ENCODE measurements at regions of chr4 and their contacts with region 1.

Region 1: GRCh38 chr4:153785910-153786721 is 2.8 kb downstream of the SFRP2 start:
- DNase-seq: peak in 1 of 35 experiments; percentile 38
- ATAC-seq: peak in 1 of 4 experiments; percentile 35
- H3K4me3 ChIP-seq: no peak overlapping the region
- H3K4me3 Mint-ChIP-seq: no peak overlapping the region
- H3K27ac ChIP-seq: no peak overlapping the region
- H3K27ac Mint-ChIP-seq: no peak overlapping the region
- H3K4me1 ChIP-seq: peaks cover 4 to 31% of the 10 kb centered on the region in 2 experiments
- H3K4me1 Mint-ChIP-seq: peaks cover 27 to 28% (median 28%) of the 10 kb centered on the region in 3 donors
- H3K27me3 ChIP-seq: peaks cover 28 to 39% of the 10 kb centered on the region in 2 experiments
- H3K27me3 Mint-ChIP-seq: peaks cover 67 to 70% of the 10 kb centered on the region in 2 donors

Region 2: DNA sequence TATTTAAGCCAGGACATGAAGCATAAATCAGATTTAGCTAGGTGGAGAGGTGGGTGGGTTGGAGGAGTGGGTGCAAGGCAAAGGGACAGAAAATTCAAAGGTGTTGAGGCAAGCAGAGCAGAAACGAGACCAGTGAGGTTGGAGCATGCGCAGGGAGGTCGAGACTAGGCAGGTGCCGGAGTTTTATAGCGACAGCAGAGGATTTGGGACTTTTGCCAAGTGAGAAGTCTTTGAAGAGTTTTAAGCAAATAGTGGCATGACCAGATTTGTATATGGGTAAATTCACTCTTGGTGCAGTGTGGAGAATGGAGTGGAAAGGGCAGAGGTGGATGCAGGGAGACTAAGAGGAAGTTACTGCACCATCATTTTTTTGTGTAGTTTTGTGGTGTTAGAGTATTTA is 209.1 kb before region 1 on chr4:
- CTCF ChIA-PET with region 1: no interaction called
- POLR2A ChIA-PET with region 1: no interaction called
- DNase-seq: no peak
- ATAC-seq: no peak
- H3K4me3 ChIP-seq: no peak overlapping the region
- H3K4me3 Mint-ChIP-seq: no peak overlapping the region
- H3K27ac ChIP-seq: no peak overlapping the region
- H3K27ac Mint-ChIP-seq: peak overlapping the region; percentile 3 to 80
- H3K4me1 ChIP-seq: peaks cover 24 to 25% of the 10 kb centered on the region in 2 experiments
- H3K4me1 Mint-ChIP-seq: peaks cover 60 to 62% (median 60%) of the 10 kb centered on the region in 3 donors
- H3K27me3 ChIP-seq: no peaks in the 10 kb centered on the region
- H3K27me3 Mint-ChIP-seq: no peaks in the 10 kb centered on the region

Region 3: GRCh38 chr4:153759407-153760316 is 26.5 kb before region 1 on chr4 and contains the start of gene RNF175:
- CTCF ChIA-PET with region 1: interaction called, 3 to 6 read pairs
- POLR2A ChIA-PET with region 1: interaction called in 1 of 2 experiments, 14 read pairs
- DNase-seq: peak in 13 of 35 experiments; percentile 9 to 26 (median 16)
- ATAC-seq: peak; percentile 51 to 62 (median 60)
- H3K4me3 ChIP-seq: peak within 1 kb of the TSS; percentile 21 to 52
- H3K4me3 Mint-ChIP-seq: peak within 1 kb of the TSS; percentile 68 to 73 (median 71)
- H3K27ac ChIP-seq: no peak within 1 kb of the TSS
- H3K27ac Mint-ChIP-seq: peak within 1 kb of the TSS; percentile 79 to 80
- H3K4me1 ChIP-seq: peaks cover 15 to 19% of the 10 kb centered on the region in 2 experiments
- H3K4me1 Mint-ChIP-seq: peaks cover 36 to 40% (median 39%) of the 10 kb centered on the region in 3 donors
- H3K27me3 ChIP-seq: peaks cover 6 to 33% of the 10 kb centered on the region in 2 experiments
- H3K27me3 Mint-ChIP-seq: peaks cover 29 to 46% of the 10 kb centered on the region in 2 donors
- total RNA-seq, gene RNF175: 1.8 to 5.4 (median 3.7) TPM

Region 4: GRCh38 chr4:154503598-154503997 is 717.5 kb after region 1 on chr4:
- CTCF ChIA-PET with region 1: interaction called, 9 to 13 read pairs
- POLR2A ChIA-PET with region 1: no interaction called
- DNase-seq: peak in 1 of 35 experiments; percentile 8
- ATAC-seq: no peak
- H3K4me3 ChIP-seq: no peak overlapping the region
- H3K4me3 Mint-ChIP-seq: no peak overlapping the region
- H3K27ac ChIP-seq: no peak overlapping the region
- H3K27ac Mint-ChIP-seq: no peak overlapping the region
- H3K4me1 ChIP-seq: no peaks in the 10 kb centered on the region
- H3K4me1 Mint-ChIP-seq: no peaks in the 10 kb centered on the region
- H3K27me3 ChIP-seq: peaks cover 3 to 7% of the 10 kb centered on the region in 2 experiments
- H3K27me3 Mint-ChIP-seq: peaks cover 26 to 41% of the 10 kb centered on the region in 2 donors